IMR-90 (cell line): ENCODE measurements at regions of chr4 and their contacts with region 1.

Region 1: GRCh38 chr4:158729716-158730559 is 6.7 kb upstream of the PPID start:
- DNase-seq: peak; percentile 75
- ATAC-seq: peak; percentile 100
- H3K4me3 ChIP-seq: no peak overlapping the region
- H3K27ac ChIP-seq: no peak overlapping the region
- H3K4me1 ChIP-seq: no peaks in the 10 kb centered on the region
- H3K27me3 ChIP-seq: peaks cover 8% of the 10 kb centered on the region
- CTCF ChIP-seq: peak; percentile 98
- POLR2A ChIP-seq: no peak
- RAD21 ChIP-seq: peak; percentile 97

Region 2: GRCh38 chr4:158845311-158846041 is 115.5 kb after region 1 on chr4:
- CTCF ChIA-PET with region 1: no interaction called
- POLR2A ChIA-PET with region 1: no interaction called
- dilution Hi-C with region 1: no loop called
- in situ Hi-C with region 1: loop called (anchors 5 kb)
- intact Hi-C with region 1: loop called (anchors 1 kb)
- DNase-seq: no peak
- ATAC-seq: no peak
- H3K4me3 ChIP-seq: no peak overlapping the region
- H3K27ac ChIP-seq: no peak overlapping the region
- H3K4me1 ChIP-seq: peaks cover 2% of the 10 kb centered on the region; the same call in 1 of the 2 replicates
- H3K27me3 ChIP-seq: no peaks in the 10 kb centered on the region
- CTCF ChIP-seq: no peak
- POLR2A ChIP-seq: no peak
- RAD21 ChIP-seq: no peak

Region 3: GRCh38 chr4:159102622-159103383 is 372.9 kb after region 1 on chr4 and contains the start of gene RAPGEF2:
- CTCF ChIA-PET with region 1: no interaction called
- POLR2A ChIA-PET with region 1: no interaction called
- dilution Hi-C with region 1: no loop called
- in situ Hi-C with region 1: no loop called
- intact Hi-C with region 1: loop called (anchors 10 kb)
- DNase-seq: peak; percentile 91
- ATAC-seq: peak; percentile 87
- H3K4me3 ChIP-seq: peak within 1 kb of the TSS; percentile 88
- H3K27ac ChIP-seq: peak within 1 kb of the TSS; percentile 40
- H3K4me1 ChIP-seq: peaks cover 2% of the 10 kb centered on the region
- H3K27me3 ChIP-seq: peaks cover 14% of the 10 kb centered on the region
- CTCF ChIP-seq: no peak
- POLR2A ChIP-seq: peak; percentile 93
- RAD21 ChIP-seq: peak; percentile 12; the same call in 1 of the 2 replicates
- total RNA-seq, gene RAPGEF2: 109 and 126 TPM in 2 replicates

Region 4: DNA sequence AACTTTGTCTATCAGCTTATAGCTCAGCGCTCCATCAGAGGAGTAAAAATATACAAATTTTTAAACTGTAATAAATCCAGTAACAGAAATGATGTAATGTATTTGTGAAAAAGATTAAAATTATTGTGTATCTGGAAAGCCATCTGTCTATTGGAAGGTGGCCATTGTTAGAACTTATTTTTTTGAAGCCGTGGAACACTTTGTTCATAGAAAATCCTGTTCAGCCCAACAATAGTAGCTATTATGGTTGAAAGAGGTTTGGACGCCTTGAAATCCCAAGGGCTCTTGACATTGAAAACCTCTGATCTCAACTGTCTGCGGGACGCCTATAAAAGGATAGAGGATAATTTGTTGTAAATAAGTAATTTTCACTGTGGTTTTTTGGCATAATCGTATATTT is 471.2 kb after region 1 on chr4:
- CTCF ChIA-PET with region 1: no interaction called
- POLR2A ChIA-PET with region 1: no interaction called
- dilution Hi-C with region 1: no loop called
- in situ Hi-C with region 1: loop called (anchors 5 kb)
- intact Hi-C with region 1: loop called (anchors 1 kb)
- DNase-seq: no peak
- ATAC-seq: no peak
- H3K4me3 ChIP-seq: no peak overlapping the region
- H3K27ac ChIP-seq: no peak overlapping the region
- H3K4me1 ChIP-seq: no peaks in the 10 kb centered on the region; the same call in 1 of the 2 replicates
- H3K27me3 ChIP-seq: no peaks in the 10 kb centered on the region
- CTCF ChIP-seq: no peak
- POLR2A ChIP-seq: no peak
- RAD21 ChIP-seq: no peak